ENCODE measurements at regions of chr2 and their contacts with region 1.

Region 1: GRCh38 chr2:3575534-3576262 is 638 bp downstream of the RPS7 start:
- H3K4me3 Mint-ChIP-seq: peak overlapping the region; percentile 89
- H3K27ac Mint-ChIP-seq: peak overlapping the region; percentile 93
- H3K4me1 Mint-ChIP-seq: peaks cover 42% of the 10 kb centered on the region
- H3K27me3 Mint-ChIP-seq: peaks cover 1% of the 10 kb centered on the region

Region 2: DNA sequence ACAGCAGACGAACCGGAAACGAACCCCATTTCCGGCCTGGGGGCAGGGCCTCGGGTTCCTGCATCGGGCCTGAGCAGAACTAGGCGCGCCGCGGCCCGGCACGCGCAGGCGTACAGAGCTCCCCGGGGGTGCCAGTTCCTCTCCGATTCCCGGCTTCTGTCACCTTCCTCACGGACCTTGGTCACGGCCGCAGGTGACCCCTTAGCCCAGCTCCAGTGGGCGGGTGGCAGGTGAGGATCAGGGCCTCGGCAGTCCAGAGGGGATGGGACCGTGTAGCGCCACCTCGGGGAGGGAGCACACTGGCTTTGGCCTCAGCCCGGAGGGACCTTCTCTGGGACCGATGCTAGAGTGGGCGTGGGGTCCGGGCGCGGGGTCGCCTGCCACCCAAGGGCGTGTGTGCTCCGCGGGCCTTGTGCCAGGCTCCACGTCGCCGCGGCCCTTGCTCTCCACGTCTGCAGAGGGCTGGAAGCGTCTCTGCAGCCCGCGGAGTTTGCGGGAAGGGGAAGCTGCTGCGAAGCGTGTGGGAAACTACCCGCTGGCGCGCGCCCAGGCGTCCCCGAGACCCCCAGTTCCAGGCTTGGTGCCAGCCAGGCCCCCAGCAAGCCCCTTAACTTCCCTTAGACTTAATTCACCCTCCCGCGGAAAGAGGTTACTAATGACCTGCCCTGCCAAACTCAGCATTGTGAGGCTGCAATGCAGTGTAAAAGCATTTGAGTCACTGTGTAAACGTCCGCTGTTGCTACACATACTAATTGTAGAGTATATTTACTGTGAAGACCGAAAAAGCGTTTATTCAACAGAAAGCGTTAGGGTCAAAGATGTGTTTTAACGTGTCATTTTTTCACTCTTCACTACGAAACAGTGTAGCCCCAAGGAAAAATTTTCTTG is 195.8 kb before region 1 on chr2 and contains the start of gene TRAPPC12:
- intact Hi-C with region 1: loop called (anchors 5 kb)
- H3K4me3 Mint-ChIP-seq: peak within 1 kb of the TSS; percentile 98
- H3K27ac Mint-ChIP-seq: peak within 1 kb of the TSS; percentile 97
- H3K4me1 Mint-ChIP-seq: peaks cover 38% of the 10 kb centered on the region
- H3K27me3 Mint-ChIP-seq: no peaks in the 10 kb centered on the region

Region 3: DNA sequence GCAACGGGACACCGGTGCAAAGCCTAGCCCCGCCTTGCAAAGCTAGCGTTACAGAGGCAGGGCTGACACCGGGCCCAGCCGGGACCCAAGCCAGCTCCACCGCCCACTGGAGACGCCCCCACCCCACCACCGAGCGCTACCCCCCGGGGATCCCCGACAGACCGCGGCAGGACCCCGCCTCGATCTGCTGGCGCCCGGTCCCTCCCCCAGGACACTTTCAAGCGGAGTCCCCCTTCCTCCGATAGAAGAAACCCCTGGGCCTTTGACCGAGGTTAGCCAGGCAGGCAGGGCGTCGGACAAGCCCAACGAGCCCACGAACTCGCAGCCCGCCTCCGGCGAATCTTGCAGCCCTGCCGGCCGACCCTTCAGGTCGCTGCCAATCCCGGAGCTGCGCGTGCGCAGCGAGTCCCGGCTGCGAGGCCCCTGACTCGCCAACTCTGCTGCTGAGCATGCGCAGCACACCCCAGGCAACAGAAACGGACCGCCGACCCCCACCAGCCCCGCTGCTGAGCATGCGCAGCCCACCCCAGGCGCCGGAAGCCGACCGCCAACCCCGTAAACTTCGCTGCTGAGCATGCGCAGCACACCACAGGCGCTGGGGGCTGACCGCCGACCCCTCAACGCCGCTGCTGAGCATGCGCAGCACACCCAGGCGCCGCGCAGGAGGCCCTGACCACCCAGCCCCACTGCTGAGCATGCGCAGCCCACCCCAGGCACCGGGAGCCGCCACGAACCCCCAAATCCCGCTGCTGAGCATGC is 57.0 kb before region 1 on chr2:
- intact Hi-C with region 1: loop called (anchors 1 kb)
- H3K4me3 Mint-ChIP-seq: peak overlapping the region; percentile 94
- H3K27ac Mint-ChIP-seq: peak overlapping the region; percentile 95
- H3K4me1 Mint-ChIP-seq: peaks cover 37% of the 10 kb centered on the region
- H3K27me3 Mint-ChIP-seq: no peaks in the 10 kb centered on the region

Region 4: DNA sequence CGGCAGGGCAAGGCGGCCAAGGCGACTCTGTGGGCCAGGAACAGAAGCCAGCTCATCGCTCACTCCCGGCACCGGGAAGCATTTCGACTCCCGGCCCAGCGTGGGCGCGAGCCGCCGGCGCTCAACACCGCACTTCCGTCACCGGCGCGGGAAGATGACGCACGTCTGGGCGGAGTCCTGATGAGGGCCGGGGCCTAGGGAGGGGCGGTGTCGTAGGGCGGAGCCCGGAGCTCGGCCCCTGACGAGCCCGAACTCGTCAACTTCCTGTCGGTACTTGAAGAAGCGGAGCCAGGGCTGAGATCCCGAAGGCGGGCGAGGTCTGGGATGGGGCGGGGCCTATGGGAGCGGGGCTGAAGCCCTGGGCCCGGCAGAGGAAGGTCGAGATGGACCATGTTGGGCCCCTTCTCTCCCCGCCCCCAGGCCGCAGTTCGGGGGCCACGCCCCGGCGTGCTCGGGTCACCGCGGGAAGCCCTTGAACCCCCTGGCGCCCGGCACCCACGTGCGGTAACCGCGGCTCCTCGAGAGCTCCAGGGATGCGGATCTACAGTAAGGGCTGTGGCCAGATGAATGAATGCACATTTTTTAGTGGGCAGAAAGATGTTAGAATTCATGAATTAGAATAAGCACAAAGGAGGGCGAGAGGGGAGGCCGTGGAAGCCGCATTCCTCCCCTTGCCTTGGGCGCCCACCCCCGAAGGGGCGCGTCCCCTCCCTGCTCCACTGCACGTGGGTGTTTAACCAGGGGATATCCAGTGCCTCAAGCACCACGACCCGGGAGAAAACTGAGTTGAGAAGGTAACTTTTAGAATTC is 17.3 kb before region 1 on chr2 and contains the start of gene RNASEH1:
- intact Hi-C with region 1: loop called (anchors 1 kb)
- H3K4me3 Mint-ChIP-seq: peak within 1 kb of the TSS; percentile 86
- H3K27ac Mint-ChIP-seq: peak within 1 kb of the TSS; percentile 95
- H3K4me1 Mint-ChIP-seq: peaks cover 9% of the 10 kb centered on the region
- H3K27me3 Mint-ChIP-seq: no peaks in the 10 kb centered on the region

Measured in dendritic cell treated with granulocyte-macrophage colony-stimulating factor and Interleukin-4, amounts not matched to agents 40 ng/mL and 50 ng/mL, for 4 days (primary cell).